Colonic mucosa (tissue), 4 donors: ENCODE measurements at regions of chr19 and their contacts with region 1.

Region 1: DNA sequence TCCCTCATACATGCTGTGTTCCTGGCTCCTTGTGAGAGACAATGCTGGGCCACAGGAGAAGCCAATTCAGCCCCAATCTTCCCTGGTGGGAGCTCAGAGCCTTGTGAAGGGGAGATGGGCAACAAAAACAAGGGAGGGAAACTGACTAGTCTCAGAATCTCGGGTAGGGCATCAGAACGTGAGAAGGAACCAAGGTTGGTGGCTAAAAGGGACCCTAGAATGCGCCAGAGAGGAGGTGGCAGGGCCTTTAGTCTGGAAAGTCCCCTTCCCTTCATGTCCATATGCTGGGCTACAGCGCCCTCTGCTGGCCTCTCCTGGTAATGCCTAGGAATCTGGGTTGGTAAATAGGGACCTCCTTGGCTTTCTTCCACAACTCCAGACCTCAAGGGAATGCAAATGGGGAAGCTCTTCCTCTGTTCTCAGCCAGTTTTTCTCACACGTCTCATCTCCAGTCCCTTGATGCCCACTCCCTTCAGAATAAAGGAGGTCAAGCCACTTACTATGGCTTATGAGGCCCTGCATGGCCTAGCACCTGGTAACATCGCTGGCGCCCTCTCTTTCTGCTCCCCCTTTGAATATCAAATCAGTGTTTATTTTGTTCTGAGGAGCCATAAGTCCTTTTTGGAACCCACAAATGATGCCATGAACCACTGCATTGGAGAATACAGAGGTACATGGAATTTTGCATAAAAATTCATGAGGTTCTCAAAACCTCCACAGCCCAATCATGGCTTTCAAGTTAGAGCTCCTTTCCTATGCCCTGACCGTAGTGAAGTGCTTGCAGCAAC is 1.4 kb upstream of the CCDC97 start:
- DNase-seq: peak; percentile 98
- H3K4me3 ChIP-seq: peak overlapping the region; percentile 47
- H3K27ac ChIP-seq: peak overlapping the region; percentile 87
- H3K4me1 ChIP-seq: peaks cover 17% of the 10 kb centered on the region
- H3K27me3 ChIP-seq: no peaks in the 10 kb centered on the region
- CTCF ChIP-seq: peak; percentile 94

Region 2: GRCh38 chr19:41206926-41207750 is 101.4 kb before region 1 on chr19:
- intact Hi-C with region 1: loop called (anchors 5 kb)
- DNase-seq: peak; percentile 43
- H3K4me3 ChIP-seq: no peak overlapping the region
- H3K27ac ChIP-seq: peak overlapping the region; percentile 13
- H3K4me1 ChIP-seq: no peaks in the 10 kb centered on the region
- H3K27me3 ChIP-seq: no peaks in the 10 kb centered on the region
- CTCF ChIP-seq: no peak

Region 3: DNA sequence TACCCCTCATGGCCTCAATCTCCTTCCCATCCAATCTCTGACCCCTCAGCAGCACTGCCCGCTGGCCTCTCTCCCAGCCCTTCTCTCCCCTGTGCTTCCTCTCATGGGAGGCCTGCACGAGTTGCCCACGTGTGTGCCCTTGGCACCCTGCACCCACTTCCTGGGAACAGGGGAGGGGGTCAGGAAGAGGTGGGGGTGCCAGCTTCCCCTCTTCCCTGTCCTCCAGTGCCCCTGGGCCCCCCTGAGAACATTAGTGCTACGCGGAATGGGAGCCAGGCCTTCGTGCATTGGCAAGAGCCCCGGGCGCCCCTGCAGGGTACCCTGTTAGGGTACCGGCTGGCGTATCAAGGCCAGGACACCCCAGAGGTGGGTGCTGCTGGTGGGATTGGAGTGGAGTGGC is 70.3 kb before region 1 on chr19:
- intact Hi-C with region 1: no loop called
- DNase-seq: no peak
- H3K4me3 ChIP-seq: no peak overlapping the region
- H3K27ac ChIP-seq: no peak overlapping the region
- H3K4me1 ChIP-seq: no peaks in the 10 kb centered on the region
- H3K27me3 ChIP-seq: no peaks in the 10 kb centered on the region
- CTCF ChIP-seq: no peak

Region 4: DNA sequence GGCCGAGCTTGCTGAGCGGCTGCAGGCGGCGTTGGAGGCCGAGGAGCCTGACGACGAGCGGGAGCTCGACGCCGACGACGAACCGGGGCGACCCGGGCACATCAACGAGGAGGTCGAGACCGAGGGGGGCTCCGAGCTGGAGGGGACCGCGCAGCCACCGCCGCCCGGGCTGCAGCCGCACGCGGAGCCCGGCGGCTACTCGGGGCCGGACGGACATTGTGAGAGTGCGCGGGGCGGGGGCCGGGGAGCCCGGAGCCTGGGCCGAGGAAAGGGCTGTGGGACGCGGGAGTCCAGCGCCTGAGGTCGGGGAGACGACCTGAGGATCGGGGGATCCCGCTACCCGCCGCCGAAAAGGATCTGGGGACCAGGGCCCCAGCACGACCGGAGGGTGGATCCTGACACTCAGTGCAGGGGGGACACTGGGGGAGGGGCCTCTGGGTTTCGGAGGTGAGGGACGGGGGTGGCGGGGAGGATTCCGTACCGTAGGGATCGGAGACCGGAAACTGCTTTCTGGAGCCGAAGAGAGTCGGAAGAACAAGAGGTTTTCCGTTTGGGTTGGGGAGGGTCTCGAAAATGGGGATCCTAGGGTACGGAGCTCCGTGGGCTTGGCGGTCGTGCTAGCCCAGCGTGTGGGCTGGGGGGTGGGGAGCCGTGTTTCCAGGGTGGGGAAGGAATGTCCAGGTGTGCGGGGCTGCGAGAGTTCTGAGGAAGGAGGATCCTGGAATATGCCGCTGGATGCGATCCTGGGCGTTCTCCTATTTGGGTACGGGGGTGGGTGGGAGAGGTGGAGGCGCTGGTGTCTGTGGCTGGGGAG is 43.8 kb before region 1 on chr19:
- intact Hi-C with region 1: loop called (anchors 5 kb)
- DNase-seq: peak; percentile 51
- H3K4me3 ChIP-seq: peak overlapping the region; percentile 99
- H3K27ac ChIP-seq: peak overlapping the region; percentile 99
- H3K4me1 ChIP-seq: peaks cover 7% of the 10 kb centered on the region
- H3K27me3 ChIP-seq: no peaks in the 10 kb centered on the region
- CTCF ChIP-seq: no peak

Region 5: DNA sequence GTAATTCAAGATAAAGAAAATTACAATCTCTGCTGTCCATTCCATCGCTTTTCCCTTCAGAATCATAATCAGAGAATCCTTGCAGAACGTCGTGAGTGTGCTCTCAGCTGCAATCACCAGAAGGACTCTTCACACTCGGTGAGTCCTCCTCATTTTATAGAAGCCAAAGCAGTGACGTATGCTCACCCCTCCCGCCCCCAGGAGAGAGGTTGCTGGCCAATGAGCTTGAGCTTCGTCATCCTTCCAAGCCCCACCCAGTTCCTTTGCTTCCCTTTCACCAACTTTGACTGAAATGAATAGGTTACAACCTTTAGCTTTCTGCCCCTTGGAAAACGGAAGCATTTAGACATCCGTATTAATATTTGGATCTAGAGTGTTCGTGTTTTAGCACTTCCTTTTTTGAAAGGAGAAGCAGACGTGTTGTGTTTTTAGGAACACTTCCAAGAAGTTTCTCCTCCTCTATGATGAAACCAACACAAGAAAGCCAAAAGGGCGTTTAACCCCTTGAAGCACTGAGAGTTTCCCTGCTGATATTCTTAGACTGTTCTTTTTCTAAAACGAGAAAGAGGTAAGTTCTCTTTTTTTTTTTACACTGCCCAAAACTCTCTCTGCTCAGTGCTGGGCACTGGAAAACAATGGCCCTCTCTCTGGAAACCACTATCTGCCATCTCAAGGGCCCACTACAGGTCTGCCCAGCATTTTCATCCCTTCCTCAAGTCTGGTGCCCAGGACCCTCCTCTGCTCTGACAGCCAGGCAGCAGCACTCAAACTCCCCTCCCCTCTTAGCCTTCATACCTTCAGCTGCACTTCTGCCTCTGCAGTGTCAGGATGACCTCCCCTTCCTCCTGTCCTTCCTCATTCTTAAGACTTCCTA is 223.1 kb after region 1 on chr19:
- intact Hi-C with region 1: no loop called
- DNase-seq: peak; percentile 59
- H3K4me3 ChIP-seq: no peak overlapping the region
- H3K27ac ChIP-seq: peak overlapping the region; percentile 28
- H3K4me1 ChIP-seq: no peaks in the 10 kb centered on the region
- H3K27me3 ChIP-seq: no peaks in the 10 kb centered on the region
- CTCF ChIP-seq: no peak